Activated CD4-positive, alpha-beta T cell treated with anti-CD3 and anti-CD28 coated beads, Interleukin-2, amount 10 ng/mL, durations not matched to agents 24 days and 14 days (primary cell): ENCODE measurements at regions of chr2 and their contacts with region 1.

Region 1: DNA sequence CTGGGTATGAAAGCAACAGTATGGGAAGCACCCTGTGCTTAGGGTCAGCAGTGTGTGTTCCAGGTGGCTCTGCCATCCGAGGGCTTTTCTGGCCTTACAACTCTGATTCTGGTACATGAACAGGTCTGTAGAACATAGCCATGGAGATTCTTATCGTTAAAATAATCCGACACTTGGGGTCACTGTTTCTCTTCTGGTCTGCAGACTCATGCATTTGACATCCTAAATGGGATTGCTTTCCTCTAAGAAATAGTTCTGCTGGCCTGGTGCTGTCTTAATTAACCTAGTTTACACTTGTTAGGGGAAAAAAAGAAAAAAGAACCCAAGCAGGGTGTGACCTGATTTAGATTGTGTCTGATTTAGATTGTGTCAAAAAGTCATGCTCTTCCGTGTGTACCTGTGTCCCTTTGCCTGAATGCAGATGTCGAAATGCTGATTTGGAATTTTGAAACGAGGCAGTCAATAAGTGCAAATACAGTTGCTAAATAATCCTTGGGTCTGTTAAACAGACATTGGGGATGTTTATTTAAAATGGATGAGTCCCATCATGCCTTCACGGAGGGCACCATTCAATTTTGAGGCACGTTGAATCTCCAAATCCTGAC is 59.6 kb downstream of the TRPM8 start:
- DNase-seq: peak; percentile 84
- H3K4me3 Mint-ChIP-seq: no peak overlapping the region
- H3K27ac Mint-ChIP-seq: no peak overlapping the region
- H3K4me1 Mint-ChIP-seq: peaks cover 23% of the 10 kb centered on the region
- H3K27me3 Mint-ChIP-seq: peaks cover 8% of the 10 kb centered on the region

Region 2: DNA sequence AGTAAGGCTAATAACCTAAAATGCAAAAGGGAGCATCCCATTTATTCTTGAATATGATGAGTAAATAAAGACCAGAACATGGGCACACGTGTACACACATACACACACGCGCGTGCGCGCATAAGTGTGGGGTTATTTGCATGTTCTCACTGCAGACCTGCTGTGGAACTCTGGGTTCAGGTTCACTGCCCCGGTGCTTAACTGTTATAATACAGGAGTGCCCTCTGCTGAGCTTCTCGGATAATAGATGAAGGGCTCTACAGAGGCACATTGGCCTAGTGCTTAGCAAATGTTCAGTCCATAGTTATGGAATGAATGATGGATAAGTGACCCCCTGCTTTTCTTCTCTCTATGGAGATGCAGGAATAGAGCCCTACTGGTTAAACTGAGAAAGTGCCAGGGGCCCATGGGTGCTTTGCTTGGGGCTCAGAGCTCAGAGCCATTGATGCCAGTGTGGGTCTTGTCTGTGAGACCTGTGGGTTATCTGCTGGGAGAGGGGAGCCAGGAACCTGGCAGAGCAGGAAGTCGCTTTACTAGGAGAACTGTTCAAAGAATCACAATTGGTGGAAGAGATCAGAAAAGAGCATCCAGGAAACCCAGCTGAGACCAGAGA is 523.7 kb after region 1 on chr2:
- intact Hi-C with region 1: loop called (anchors 1 kb)
- DNase-seq: peak; percentile 92
- H3K4me3 Mint-ChIP-seq: no peak overlapping the region
- H3K27ac Mint-ChIP-seq: peak overlapping the region; percentile 9
- H3K4me1 Mint-ChIP-seq: peaks cover 29% of the 10 kb centered on the region
- H3K27me3 Mint-ChIP-seq: peaks cover 23% of the 10 kb centered on the region

Region 3: DNA sequence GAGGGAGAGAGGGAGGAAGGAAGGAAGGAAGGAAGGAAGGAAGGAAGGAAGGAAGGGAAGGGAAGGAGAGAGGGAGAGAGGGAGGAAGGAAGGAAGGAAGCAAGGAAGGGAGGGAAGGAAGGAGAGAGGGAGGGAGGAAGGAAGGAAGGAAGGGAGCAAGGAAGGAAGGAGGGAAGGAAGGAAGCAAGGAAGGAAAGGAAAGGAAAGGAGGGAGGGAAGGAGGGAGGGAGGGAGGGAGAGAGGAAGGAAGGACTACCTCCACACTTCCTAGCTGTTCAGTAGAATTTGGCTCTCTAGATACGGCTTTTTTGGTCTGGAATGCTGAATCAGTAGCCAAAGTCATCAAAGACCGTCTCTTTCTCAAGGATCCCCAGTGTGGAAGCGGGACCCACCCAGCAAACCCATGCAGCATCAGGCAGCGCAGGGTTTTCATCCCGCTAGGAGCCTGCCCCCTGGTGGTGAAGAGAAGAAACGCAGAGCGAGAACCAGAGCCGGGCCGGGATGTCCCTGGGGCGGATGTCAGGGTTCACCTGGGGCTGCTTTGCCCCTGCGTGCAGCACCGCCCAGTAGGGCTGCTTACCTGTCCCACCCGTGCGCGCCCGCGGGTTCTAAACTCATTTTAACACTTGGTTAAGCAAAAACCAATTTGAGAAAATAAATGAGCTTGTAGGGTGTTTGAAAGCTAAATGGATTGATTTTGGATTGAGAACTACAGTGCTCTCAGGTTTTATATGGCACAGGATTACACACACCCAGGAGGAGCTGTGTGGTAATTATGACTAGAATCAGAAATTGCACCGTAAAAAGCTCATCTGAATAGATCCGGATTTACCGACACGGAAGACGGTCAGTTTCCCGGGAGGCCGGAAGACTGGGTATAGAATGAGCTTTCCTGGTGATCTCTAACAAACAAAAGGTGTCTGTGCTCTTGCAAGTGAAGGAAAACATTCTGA is 568.1 kb after region 1 on chr2:
- intact Hi-C with region 1: loop called (anchors 1 kb)
- DNase-seq: peak; percentile 94
- H3K4me3 Mint-ChIP-seq: no peak overlapping the region
- H3K27ac Mint-ChIP-seq: no peak overlapping the region
- H3K4me1 Mint-ChIP-seq: peaks cover 2% of the 10 kb centered on the region
- H3K27me3 Mint-ChIP-seq: peaks cover 32% of the 10 kb centered on the region